BJ (cell line): ENCODE measurements at regions of chr5 and their contacts with region 1.

Region 1: GRCh38 chr5:148957591-148958202 is 105.2 kb downstream of the SH3TC2 start:
- DNase-seq: no peak
- H3K4me3 ChIP-seq: no peak overlapping the region
- H3K27me3 ChIP-seq: no peaks in the 10 kb centered on the region; the same call in 1 of the 2 replicates
- CTCF ChIP-seq: peak; percentile 92

Region 2: DNA sequence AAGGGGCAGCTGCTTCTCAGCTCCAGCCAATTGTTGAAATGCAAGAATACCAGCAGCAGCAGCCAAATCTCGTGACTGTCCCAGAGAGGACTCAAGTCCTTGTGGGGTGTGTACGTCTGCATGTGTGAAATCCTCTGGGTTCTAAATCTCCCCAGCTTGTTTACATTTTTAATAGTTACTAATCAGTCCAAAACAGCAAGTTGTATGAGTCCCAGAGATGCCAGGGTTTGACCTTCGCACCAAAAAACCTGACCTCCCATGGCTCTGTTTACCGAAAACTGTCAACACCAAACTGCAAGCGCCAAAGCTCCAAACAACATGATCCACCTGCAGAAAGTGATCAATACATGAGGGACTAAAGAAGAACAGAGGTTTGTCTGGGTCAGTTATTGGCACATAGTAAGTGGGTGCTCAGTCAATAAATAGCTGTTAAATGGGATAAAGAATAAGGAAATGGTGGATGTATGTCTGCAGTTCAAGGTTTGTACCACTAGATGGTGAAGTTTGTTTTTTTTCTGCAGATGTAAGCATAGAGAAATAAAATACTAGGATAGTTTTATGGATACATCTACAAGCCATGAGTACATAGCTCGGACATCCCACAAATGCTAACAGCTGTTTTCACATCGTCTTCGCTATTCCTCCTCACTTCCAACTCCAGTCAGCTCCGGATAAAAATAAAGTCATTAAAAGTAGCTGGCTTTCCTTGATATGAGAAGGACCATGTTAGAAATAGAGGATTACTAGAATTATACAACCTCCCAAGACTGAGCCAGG is 216.5 kb before region 1 on chr5:
- CTCF ChIA-PET with region 1: interaction called, 14 read pairs
- POLR2A ChIA-PET with region 1: no interaction called
- DNase-seq: peak; percentile 51
- H3K4me3 ChIP-seq: no peak overlapping the region
- H3K27me3 ChIP-seq: no peaks in the 10 kb centered on the region
- CTCF ChIP-seq: peak; percentile 64

Region 3: DNA sequence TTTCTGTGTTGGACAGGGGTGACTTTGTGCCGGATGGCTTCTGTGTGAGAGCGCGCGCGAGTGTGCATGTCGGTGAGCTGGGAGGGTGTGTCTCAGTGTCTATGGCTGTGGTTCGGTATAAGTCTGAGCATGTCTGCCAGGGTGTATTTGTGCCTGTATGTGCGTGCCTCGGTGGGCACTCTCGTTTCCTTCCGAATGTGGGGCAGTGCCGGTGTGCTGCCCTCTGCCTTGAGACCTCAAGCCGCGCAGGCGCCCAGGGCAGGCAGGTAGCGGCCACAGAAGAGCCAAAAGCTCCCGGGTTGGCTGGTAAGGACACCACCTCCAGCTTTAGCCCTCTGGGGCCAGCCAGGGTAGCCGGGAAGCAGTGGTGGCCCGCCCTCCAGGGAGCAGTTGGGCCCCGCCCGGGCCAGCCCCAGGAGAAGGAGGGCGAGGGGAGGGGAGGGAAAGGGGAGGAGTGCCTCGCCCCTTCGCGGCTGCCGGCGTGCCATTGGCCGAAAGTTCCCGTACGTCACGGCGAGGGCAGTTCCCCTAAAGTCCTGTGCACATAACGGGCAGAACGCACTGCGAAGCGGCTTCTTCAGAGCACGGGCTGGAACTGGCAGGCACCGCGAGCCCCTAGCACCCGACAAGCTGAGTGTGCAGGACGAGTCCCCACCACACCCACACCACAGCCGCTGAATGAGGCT is 131.5 kb before region 1 on chr5 and contains the start of gene ADRB2:
- CTCF ChIA-PET with region 1: interaction called, 26 read pairs
- POLR2A ChIA-PET with region 1: no interaction called
- DNase-seq: peak; percentile 63
- H3K4me3 ChIP-seq: peak within 1 kb of the TSS; percentile 76
- H3K27me3 ChIP-seq: no peaks in the 10 kb centered on the region
- CTCF ChIP-seq: no peak; the same call in 1 of the 2 replicates
- polyA plus RNA-seq, gene ADRB2: 0.58 and 0.64 TPM in 2 replicates

Region 4: DNA sequence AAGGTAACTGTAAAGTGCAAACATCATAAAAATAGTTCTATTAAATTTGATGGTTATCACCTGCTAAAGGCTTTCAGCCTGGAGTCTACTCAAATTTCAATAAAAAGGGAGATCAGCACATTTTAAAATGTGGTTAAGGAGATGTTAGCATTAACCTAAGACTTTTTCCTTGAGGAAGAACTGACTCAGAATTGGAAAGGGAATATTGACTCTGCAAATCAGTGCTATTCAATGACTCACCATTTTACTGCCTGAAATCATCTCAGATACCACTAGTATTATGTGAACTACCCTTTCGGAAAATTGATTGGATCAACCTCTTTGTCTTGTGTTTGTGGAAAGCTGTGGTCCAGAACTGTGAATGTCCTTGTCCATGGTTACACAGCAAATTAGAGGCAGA is 18.0 kb before region 1 on chr5:
- CTCF ChIA-PET with region 1: interaction called, 21 read pairs
- POLR2A ChIA-PET with region 1: no interaction called
- DNase-seq: peak; percentile 41
- H3K4me3 ChIP-seq: no peak overlapping the region
- H3K27me3 ChIP-seq: no peaks in the 10 kb centered on the region
- CTCF ChIP-seq: no peak

Region 5: GRCh38 chr5:148979104-148979723 is 21.5 kb after region 1 on chr5:
- CTCF ChIA-PET with region 1: interaction called, 11 read pairs
- POLR2A ChIA-PET with region 1: no interaction called
- DNase-seq: no peak
- H3K4me3 ChIP-seq: no peak overlapping the region
- H3K27me3 ChIP-seq: no peaks in the 10 kb centered on the region
- CTCF ChIP-seq: no peak